Left lung (tissue), 14 donors: ENCODE measurements at regions of chrX and their contacts with region 1.

Region 1: GRCh38 chrX:16892504-16893362 is 22.6 kb upstream of the RBBP7 start:
- DNase-seq: peak in 3 of 4 donors; percentile 50 to 78 (median 55)
- ATAC-seq: peak; percentile 98
- H3K4me3 ChIP-seq: no peak overlapping the region
- H3K27ac ChIP-seq: no peak overlapping the region
- H3K4me1 ChIP-seq: peaks cover 0 to 4% of the 10 kb centered on the region in 2 donors
- H3K27me3 ChIP-seq: peaks cover 0 to 10% of the 10 kb centered on the region in 2 donors
- CTCF ChIP-seq: peak; percentile 73 to 90

Region 2: GRCh38 chrX:17007206-17007683 is 114.5 kb after region 1 on chrX:
- intact Hi-C with region 1: no loop called
- DNase-seq: no peak
- ATAC-seq: peak; percentile 49
- H3K4me3 ChIP-seq: no peak overlapping the region
- H3K27ac ChIP-seq: no peak overlapping the region
- H3K4me1 ChIP-seq: no peaks in the 10 kb centered on the region
- H3K27me3 ChIP-seq: peaks cover 0 to 10% of the 10 kb centered on the region in 2 donors
- CTCF ChIP-seq: peak in 1 of 2 donors; percentile 12

Region 3: GRCh38 chrX:17038681-17039161 is 146.0 kb after region 1 on chrX:
- intact Hi-C with region 1: loop called in 1 of 2 experiments (anchors 10 kb)
- DNase-seq: peak in 2 of 4 donors; percentile 51 to 63
- ATAC-seq: peak; percentile 49
- H3K4me3 ChIP-seq: no peak overlapping the region
- H3K27ac ChIP-seq: no peak overlapping the region
- H3K4me1 ChIP-seq: no peaks in the 10 kb centered on the region
- H3K27me3 ChIP-seq: peaks cover 0 to 8% of the 10 kb centered on the region in 2 donors
- CTCF ChIP-seq: no peak